ENCODE measurements at regions of chr12 and their contacts with region 1.

Region 1: GRCh38 chr12:96466939-96467751 is 22.2 kb upstream of the CFAP54 start:
- DNase-seq: no peak
- ATAC-seq: no peak
- H3K4me3 ChIP-seq: no peak overlapping the region
- H3K4me3 Mint-ChIP-seq: no peak overlapping the region
- H3K27ac ChIP-seq: no peak overlapping the region
- H3K27ac Mint-ChIP-seq: no peak overlapping the region
- H3K4me1 ChIP-seq: no peaks in the 10 kb centered on the region
- H3K4me1 Mint-ChIP-seq: no peaks in the 10 kb centered on the region
- H3K27me3 ChIP-seq: no peaks in the 10 kb centered on the region
- H3K27me3 Mint-ChIP-seq: no peaks in the 10 kb centered on the region
- CTCF ChIP-seq: no peak

Region 2: DNA sequence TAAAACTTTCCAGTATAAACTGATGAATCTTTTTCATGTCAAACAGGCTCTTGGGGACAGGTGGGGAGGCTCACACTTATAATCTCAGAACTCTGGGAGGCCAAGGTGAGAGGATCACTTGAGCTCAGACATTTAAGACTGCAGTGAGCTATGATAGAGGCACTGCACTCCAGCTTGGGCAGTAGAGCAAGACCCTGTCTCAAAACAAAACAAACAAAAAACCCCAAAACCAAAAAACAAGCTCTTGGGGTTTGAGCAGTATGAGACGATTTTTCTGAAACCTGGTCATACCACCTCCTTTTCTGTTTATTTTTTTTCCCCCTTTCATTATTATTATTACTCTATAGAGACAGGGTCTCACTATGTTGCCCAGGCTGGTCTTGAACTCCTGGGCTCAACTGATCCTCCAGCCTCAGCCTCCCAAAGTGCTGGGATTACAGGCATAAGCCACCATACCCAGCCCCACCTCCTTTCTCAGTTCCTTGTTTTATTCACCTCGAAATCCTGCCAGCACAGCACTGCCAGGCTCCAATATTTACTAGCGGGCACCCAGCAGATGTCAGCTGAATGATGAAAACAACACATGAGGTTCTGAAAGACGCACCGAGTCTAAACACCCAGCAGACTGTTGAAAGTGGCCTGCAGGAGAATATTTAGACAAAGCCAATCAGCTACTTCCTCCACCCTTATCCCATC is 47.4 kb before region 1 on chr12:
- CTCF ChIA-PET with region 1: no interaction called
- POLR2A ChIA-PET with region 1: no interaction called
- intact Hi-C with region 1: loop called in 1 of 2 experiments (anchors 5 kb)
- DNase-seq: no peak
- ATAC-seq: no peak
- H3K4me3 ChIP-seq: no peak overlapping the region
- H3K4me3 Mint-ChIP-seq: no peak overlapping the region
- H3K27ac ChIP-seq: no peak overlapping the region
- H3K27ac Mint-ChIP-seq: peak overlapping the region; percentile 32
- H3K4me1 ChIP-seq: no peaks in the 10 kb centered on the region
- H3K4me1 Mint-ChIP-seq: peaks cover 22% of the 10 kb centered on the region
- H3K27me3 ChIP-seq: no peaks in the 10 kb centered on the region
- H3K27me3 Mint-ChIP-seq: no peaks in the 10 kb centered on the region
- CTCF ChIP-seq: no peak

Region 3: DNA sequence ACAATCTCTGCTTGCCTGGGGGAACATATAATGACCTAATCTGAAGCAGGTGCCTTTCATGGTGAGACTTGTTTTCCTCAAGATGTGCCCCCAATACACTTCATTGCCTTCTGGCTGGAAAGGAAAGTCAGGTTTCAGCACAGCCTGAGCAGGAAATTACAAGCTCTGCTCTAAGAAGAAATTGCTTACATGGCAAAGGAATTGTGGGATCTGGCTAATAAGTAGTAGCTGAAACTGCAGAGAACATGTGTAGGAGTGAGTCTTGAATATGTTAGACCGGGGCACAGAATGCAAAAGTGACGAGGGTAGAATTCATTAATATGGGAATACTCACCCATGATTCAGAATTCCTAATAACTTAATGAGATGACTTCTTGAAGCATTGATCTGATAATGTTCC is 16.0 kb after region 1 on chr12:
- CTCF ChIA-PET with region 1: no interaction called
- POLR2A ChIA-PET with region 1: no interaction called
- intact Hi-C with region 1: no loop called
- DNase-seq: no peak
- ATAC-seq: no peak
- H3K4me3 ChIP-seq: no peak overlapping the region
- H3K4me3 Mint-ChIP-seq: no peak overlapping the region
- H3K27ac ChIP-seq: no peak overlapping the region
- H3K27ac Mint-ChIP-seq: no peak overlapping the region
- H3K4me1 ChIP-seq: peaks cover 10% of the 10 kb centered on the region
- H3K4me1 Mint-ChIP-seq: peaks cover 14% of the 10 kb centered on the region
- H3K27me3 ChIP-seq: no peaks in the 10 kb centered on the region
- H3K27me3 Mint-ChIP-seq: no peaks in the 10 kb centered on the region
- CTCF ChIP-seq: no peak

Region 4: DNA sequence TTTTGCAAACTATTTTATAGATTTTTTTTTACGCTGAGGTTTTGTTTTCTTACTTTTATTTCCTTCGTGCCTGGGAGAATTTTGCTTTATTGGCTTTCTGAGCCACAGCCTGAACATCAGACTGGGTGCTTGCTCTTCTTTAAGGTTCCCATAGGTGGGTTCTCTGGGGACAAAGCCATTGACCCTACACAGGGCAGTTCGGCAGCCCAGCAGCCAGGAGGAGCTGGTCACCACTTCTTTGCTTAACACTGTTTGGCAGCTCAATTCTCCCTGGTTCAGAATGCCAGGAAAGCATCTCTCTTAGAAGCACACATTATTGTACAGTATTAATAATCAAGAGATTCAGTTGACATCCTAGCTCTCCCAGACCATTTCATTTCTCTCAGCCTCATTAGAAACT is 299.1 kb after region 1 on chr12:
- CTCF ChIA-PET with region 1: no interaction called
- POLR2A ChIA-PET with region 1: no interaction called
- intact Hi-C with region 1: no loop called
- DNase-seq: no peak
- ATAC-seq: no peak
- H3K4me3 ChIP-seq: no peak overlapping the region
- H3K4me3 Mint-ChIP-seq: no peak overlapping the region
- H3K27ac ChIP-seq: no peak overlapping the region
- H3K27ac Mint-ChIP-seq: no peak overlapping the region
- H3K4me1 ChIP-seq: no peaks in the 10 kb centered on the region
- H3K4me1 Mint-ChIP-seq: no peaks in the 10 kb centered on the region
- H3K27me3 ChIP-seq: no peaks in the 10 kb centered on the region
- H3K27me3 Mint-ChIP-seq: peaks cover 7% of the 10 kb centered on the region
- CTCF ChIP-seq: no peak

Measured in CD8-positive, alpha-beta T cell (primary cell).